Activated CD4-positive, alpha-beta T cell treated with anti-CD3 and anti-CD28 coated beads for 36 hours (primary cell): ENCODE measurements at regions of chr7 and their contacts with region 1.

Region 1: DNA sequence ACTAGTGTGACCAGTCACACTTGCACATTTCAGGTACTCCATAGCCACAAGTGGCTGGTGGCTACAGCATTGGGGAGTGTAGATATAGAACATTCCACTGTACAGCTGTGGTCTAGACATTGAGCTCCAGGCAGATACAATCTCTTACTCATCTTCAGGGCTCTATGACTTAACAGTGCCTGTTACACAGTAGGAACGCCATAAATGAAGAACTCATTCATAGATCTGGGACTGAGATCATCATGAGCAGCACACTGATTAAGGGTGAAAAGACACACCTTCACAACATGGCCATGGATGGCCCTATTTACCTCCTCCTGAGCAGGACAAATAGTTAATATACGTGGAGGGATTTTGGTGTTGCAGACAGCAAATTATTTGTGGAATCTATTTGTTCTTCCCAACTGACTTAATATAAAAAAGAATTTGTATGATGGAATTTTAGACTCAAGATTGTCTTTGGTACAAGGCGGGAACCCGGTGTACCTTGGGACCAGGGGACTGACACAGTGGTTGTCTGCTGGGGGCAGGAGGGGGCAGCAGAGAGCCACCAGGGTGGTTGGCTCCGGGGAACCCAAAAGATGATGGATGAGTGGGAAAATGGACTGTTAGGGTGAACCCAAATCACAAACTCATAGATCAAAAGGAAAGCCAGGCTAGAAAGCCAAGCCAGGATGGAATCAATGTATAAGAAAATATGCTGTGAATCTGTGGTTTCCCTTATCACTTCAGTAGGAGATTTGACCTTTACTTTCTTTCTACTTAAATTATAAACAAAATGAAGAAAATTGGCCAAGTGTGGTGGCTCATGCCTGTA is 24.3 kb upstream of the CPA2 start:
- DNase-seq: peak; percentile 81
- ATAC-seq: peak; percentile 90
- H3K4me3 Mint-ChIP-seq: no peak overlapping the region
- H3K27ac Mint-ChIP-seq: no peak overlapping the region
- H3K4me1 Mint-ChIP-seq: peaks cover 15% of the 10 kb centered on the region
- H3K27me3 Mint-ChIP-seq: no peaks in the 10 kb centered on the region

Region 2: DNA sequence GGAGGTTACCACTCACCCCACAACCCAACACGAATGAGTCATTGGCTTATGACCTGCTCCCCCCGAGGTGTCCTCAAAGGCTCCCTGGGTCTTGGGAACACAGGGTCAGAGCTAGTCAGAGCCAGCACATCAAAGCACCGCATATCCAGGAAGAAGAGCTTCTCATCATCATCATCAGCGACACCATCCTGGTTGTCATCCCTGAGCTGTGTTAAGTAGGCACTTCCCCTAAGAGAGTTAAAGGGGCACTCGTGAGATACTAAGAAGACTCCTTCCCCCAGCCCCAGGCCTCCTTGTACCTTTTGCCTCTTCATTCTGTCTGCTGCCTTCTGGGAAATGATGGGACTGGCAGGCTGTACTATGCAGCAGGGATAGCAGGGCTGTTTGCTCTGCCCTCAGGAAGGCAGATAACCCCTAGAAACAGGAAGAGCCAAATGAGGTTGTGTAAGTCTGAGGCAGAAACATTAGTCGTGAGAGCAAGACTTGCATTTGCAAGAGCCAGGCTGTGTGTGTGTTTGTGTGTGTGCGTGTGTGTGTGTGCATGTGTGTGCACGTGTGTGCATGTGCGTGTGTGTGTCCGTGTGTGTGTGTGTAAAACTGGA is 126.8 kb after region 1 on chr7:
- CTCF ChIA-PET with region 1: no interaction called
- POLR2A ChIA-PET with region 1: no interaction called
- intact Hi-C with region 1: no loop called
- DNase-seq: peak; percentile 22
- ATAC-seq: peak; percentile 30
- H3K4me3 Mint-ChIP-seq: no peak overlapping the region
- H3K27ac Mint-ChIP-seq: peak overlapping the region; percentile 48
- H3K4me1 Mint-ChIP-seq: peaks cover 29% of the 10 kb centered on the region
- H3K27me3 Mint-ChIP-seq: no peaks in the 10 kb centered on the region

Region 3: GRCh38 chr7:130486114-130486958 is 243.9 kb after region 1 on chr7:
- CTCF ChIA-PET with region 1: interaction called, 3 read pairs
- POLR2A ChIA-PET with region 1: no interaction called
- intact Hi-C with region 1: loop called (anchors 1 to 5 kb)
- DNase-seq: peak; percentile 77
- ATAC-seq: peak; percentile 82
- H3K4me3 Mint-ChIP-seq: peak overlapping the region; percentile 61
- H3K27ac Mint-ChIP-seq: peak overlapping the region; percentile 43
- H3K4me1 Mint-ChIP-seq: peaks cover 24% of the 10 kb centered on the region
- H3K27me3 Mint-ChIP-seq: peaks cover 43% of the 10 kb centered on the region

Region 4: GRCh38 chr7:130695840-130696239 is 453.4 kb after region 1 on chr7:
- CTCF ChIA-PET with region 1: no interaction called
- POLR2A ChIA-PET with region 1: no interaction called
- intact Hi-C with region 1: loop called in 1 of 2 experiments (anchors 2 kb)
- DNase-seq: no peak
- ATAC-seq: no peak
- H3K4me3 Mint-ChIP-seq: no peak overlapping the region
- H3K27ac Mint-ChIP-seq: no peak overlapping the region
- H3K4me1 Mint-ChIP-seq: no peaks in the 10 kb centered on the region
- H3K27me3 Mint-ChIP-seq: peaks cover 4% of the 10 kb centered on the region

Region 5: GRCh38 chr7:130758429-130759056 is 516.1 kb after region 1 on chr7:
- CTCF ChIA-PET with region 1: interaction called, 12 read pairs
- POLR2A ChIA-PET with region 1: no interaction called
- intact Hi-C with region 1: loop called (anchors 1 kb)
- DNase-seq: no peak
- ATAC-seq: no peak
- H3K4me3 Mint-ChIP-seq: no peak overlapping the region
- H3K27ac Mint-ChIP-seq: no peak overlapping the region
- H3K4me1 Mint-ChIP-seq: no peaks in the 10 kb centered on the region
- H3K27me3 Mint-ChIP-seq: peaks cover 2% of the 10 kb centered on the region